ENCODE measurements at regions of chr16 and their contacts with region 1.

Region 1: DNA sequence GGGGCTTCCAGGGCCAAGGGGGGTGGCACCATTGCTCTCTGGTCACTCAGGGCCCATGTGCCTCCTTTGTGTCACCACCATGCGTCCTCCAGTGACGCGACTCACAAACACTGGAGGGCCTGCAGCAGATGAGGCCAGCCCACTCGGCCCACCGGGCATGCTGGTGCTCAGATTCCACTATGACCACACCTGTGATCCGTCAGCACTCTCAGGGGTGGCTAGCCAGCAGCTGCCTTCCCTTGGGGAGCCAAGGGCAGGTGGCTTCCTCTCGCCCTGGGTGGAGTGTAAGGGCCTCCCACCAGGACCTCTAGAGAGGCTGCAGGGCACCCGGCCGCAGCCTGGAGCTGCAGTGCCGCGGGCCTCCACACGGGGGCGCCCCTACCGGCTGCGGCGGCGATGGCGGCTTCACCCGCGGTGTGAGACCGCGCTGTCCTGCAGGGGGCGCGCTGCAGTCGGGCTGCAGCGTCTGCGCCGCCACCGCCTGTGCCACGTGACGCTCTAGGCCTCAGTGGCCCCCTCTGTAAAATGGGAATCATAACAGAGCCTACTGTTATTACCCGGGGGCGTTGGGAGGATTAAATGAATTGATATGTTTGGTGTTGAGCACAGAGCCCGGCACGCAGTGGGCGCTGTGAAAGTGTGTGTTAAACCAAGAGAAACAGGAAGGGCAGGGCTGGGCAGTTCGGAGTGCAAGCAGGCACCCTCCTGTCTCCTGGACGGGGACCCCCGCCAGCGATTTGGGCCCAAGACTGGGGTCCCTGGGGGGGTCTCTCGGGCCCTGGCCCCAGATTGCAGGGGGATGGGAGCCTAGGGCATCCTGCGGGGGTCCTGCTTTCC is 192.4 kb upstream of the GSE1 start:
- DNase-seq: peak; percentile 16 to 72
- ATAC-seq: peak; percentile 42 to 81 (median 61)
- H3K4me3 ChIP-seq: no peak overlapping the region
- H3K27ac ChIP-seq: no peak overlapping the region
- H3K4me1 ChIP-seq: peaks cover 3 to 18% (median 7%) of the 10 kb centered on the region in 9 donors
- H3K27me3 ChIP-seq: no peaks in the 10 kb centered on the region
- CTCF ChIP-seq: peak; percentile 99 to 100 (median 100)

Region 2: GRCh38 chr16:85479972-85480751 is 59.4 kb after region 1 on chr16:
- intact Hi-C with region 1: loop called in 2 of 10 experiments (anchors 10 kb)
- DNase-seq: peak in 1 of 2 donors; percentile 40
- ATAC-seq: peak in 6 of 8 donors; percentile 15 to 32 (median 28)
- H3K4me3 ChIP-seq: no peak overlapping the region
- H3K27ac ChIP-seq: no peak overlapping the region
- H3K4me1 ChIP-seq: peaks cover 0 to 3% (median 0%) of the 10 kb centered on the region in 9 donors
- H3K27me3 ChIP-seq: no peaks in the 10 kb centered on the region
- CTCF ChIP-seq: peak in 8 of 9 donors; percentile 11 to 52 (median 21)

Region 3: GRCh38 chr16:85514595-85515318 is 94.0 kb after region 1 on chr16:
- intact Hi-C with region 1: no loop called
- DNase-seq: peak; percentile 60 to 70
- ATAC-seq: peak; percentile 77 to 91 (median 86)
- H3K4me3 ChIP-seq: no peak overlapping the region
- H3K27ac ChIP-seq: peak overlapping the region in 8 of 10 donors; percentile 59 to 87 (median 74)
- H3K4me1 ChIP-seq: peaks cover 12 to 33% (median 25%) of the 10 kb centered on the region in 9 donors
- H3K27me3 ChIP-seq: no peaks in the 10 kb centered on the region
- CTCF ChIP-seq: no peak

Region 4: DNA sequence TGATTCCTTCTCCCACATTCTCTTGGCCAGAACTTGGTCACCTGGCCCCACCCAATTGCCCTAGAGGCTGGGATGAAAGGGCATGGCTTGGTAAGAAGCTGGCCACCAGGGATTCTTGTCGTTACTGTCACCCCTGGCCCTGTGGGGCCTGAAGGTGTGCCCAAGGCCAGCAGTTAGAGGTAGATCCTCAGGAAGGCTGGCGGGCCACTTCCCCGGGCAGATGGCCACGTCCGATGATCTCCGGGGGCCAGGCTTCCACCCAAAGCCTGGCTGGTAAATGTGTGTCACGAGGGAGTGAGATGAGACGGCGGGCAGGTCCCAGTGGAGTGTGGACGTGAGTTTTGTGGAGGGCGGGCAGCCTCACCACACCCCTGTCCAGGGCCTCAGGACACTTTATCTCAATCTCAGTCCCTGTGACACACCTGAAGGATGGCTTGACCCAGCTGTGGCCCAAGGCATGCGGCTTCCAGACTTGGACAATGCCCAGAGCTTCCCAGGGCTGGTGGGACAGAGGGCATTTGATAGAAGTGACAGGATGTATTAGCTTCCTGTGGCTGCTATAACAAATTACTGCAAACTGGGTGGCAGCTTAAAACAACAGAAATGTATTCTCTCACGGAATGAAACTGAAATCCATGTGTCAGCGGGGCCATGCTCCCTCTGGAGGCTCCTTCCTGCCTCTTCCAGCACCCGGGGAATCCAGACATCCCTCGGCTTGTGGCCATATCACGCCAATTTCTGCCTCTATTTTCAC is 126.2 kb after region 1 on chr16:
- intact Hi-C with region 1: loop called in 1 of 10 experiments (anchors 5 kb)
- DNase-seq: no peak
- ATAC-seq: no peak
- H3K4me3 ChIP-seq: no peak overlapping the region
- H3K27ac ChIP-seq: no peak overlapping the region
- H3K4me1 ChIP-seq: peaks cover 2 to 30% (median 22%) of the 10 kb centered on the region in 9 donors
- H3K27me3 ChIP-seq: no peaks in the 10 kb centered on the region
- CTCF ChIP-seq: peak in 6 of 9 donors; percentile 12 to 47 (median 38)

Region 5: DNA sequence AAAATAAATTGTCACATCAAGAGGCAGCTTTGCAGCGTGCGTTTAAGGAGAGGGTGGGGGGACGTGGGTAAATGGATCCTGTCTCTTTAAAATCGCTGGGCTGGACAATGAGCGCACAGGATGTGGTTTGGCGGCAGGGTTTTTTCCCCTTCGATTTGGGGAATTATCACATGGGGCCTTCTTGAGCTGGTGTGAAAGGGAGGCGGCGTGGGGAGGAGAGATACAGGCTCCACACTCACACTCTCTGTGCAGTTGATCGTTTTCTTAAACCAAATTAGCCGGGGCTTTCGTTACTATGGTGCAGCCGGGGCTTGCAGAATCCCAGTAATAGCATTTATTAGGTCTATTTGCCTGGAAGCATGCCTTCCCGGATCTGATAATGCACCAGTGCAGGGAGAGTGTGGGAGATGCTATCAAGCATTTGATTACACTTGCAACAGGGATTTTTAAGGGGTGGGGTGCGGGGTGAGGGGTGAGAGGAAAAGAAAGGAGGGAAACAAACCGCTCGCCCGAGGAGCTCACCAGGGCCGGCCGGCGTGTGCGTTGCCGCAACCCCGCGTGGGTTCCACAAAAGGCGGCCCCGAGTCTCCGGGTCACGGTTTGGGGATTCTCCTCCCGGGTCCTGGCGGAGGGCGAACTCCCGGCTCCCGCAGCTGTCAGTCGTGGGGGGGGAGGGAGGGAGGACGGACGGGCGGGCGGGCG is 133.5 kb after region 1 on chr16:
- intact Hi-C with region 1: loop called in 5 of 10 experiments (anchors 2 to 5 kb)
- DNase-seq: peak; percentile 53 to 82
- ATAC-seq: peak; percentile 13 to 67 (median 54)
- H3K4me3 ChIP-seq: peak overlapping the region; percentile 59 to 86 (median 77)
- H3K27ac ChIP-seq: peak overlapping the region; percentile 77 to 96 (median 94)
- H3K4me1 ChIP-seq: peaks cover 4 to 53% (median 41%) of the 10 kb centered on the region in 9 donors
- H3K27me3 ChIP-seq: no peaks in the 10 kb centered on the region
- CTCF ChIP-seq: no peak